Activated T-helper 1 cell treated with anti-CD3 and anti-CD28 coated beads, Interleukin-12 subunit alpha, Interleukin-12 subunit beta, Interleukin-2, Interleukin-4 antibody, amounts not matched to agents 30 ng/mL and 10 ng/mL and 1 ng/mL, durations not matched to agents 14 hours and 24 hours and 36 hours (primary cell): ENCODE measurements at regions of chr3 and their contacts with region 1.

Region 1: DNA sequence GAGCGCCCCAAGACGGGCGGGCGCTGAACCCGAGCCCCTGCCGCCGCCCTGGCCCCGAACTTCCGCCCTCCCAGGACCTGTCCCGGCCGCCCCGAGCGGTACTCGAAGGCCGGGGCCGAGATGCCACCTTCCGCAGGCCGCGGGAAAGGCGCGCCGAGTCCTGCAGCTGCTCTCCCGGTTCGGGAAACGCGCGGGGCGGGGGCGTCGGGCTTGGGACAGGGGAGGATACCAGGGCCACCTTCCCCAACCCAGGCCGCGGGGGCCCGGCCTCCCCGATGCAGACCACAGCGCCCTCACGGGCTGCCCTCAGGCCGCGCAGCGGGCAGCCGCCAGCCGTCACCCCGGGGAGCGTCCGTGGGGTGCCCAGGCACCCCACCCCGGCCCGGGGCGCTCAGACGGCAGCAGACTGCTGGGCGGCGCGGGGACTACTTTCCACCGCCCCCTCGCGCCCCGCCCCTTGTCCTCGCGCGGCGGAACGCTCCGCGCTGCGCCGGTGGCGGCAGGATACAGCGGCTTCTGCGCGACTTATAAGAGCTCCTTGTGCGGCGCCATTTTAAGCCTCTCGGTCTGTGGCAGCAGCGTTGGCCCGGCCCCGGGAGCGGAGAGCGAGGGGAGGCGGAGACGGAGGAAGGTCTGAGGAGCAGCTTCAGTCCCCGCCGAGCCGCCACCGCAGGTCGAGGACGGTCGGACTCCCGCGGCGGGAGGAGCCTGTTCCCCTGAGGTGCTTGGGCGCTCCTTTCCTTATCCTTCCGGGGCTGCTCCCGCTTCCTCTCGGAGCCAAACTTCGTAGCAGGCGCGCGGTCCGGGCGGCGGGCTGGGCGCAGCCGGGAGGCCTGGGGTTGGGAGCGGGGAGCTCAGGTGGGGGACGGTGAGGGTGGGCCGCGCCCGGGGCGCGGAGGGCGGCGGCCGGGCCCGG is at the start of gene CTNNB1:
- DNase-seq: peak; percentile 87
- H3K4me3 Mint-ChIP-seq: peak within 1 kb of the TSS; percentile 97
- H3K27ac Mint-ChIP-seq: peak within 1 kb of the TSS; percentile 98
- H3K4me1 Mint-ChIP-seq: peaks cover 36% of the 10 kb centered on the region
- H3K27me3 Mint-ChIP-seq: peaks cover 22% of the 10 kb centered on the region
- total RNA-seq, gene CTNNB1: 137 and 139 TPM in 2 replicates

Region 2: DNA sequence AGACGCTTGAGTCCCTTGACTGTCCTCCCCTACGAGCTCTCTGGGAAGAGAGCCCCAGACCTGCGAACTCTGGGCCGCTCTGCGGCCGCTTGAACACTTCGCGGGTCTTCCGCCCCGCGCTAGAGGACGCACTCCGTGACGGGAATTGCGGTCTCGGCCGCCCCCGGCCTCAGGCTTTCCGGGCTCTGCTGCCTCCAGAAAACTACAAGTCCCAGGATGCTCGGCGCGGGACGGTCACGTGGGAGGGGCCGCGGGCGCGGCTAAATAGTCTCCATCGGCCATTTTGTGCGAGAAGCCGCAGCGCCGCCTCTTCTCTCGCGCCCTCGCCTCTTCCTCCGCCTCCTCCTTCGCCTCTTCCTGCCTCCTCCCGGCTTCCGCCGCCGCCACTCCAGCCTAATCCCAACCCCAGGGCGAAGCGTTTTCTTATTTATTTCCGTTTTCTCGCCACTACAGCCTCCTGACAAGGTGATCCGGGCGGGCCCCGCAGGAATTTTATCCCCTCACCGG is 889.7 kb before region 1 on chr3 and contains the start of gene EIF1B:
- intact Hi-C with region 1: loop called (anchors 1 kb)
- DNase-seq: peak; percentile 98
- H3K4me3 Mint-ChIP-seq: peak within 1 kb of the TSS; percentile 96
- H3K27ac Mint-ChIP-seq: peak within 1 kb of the TSS; percentile 95
- H3K4me1 Mint-ChIP-seq: peaks cover 28% of the 10 kb centered on the region
- H3K27me3 Mint-ChIP-seq: no peaks in the 10 kb centered on the region
- total RNA-seq, gene EIF1B: 49.1 and 49.6 TPM in 2 replicates

Region 3: GRCh38 chr3:40524568-40525285 is 674.5 kb before region 1 on chr3 and contains the start of gene ZNF621:
- intact Hi-C with region 1: loop called (anchors 2 kb)
- DNase-seq: peak; percentile 84
- H3K4me3 Mint-ChIP-seq: peak within 1 kb of the TSS; percentile 97
- H3K27ac Mint-ChIP-seq: peak within 1 kb of the TSS; percentile 95
- H3K4me1 Mint-ChIP-seq: peaks cover 26% of the 10 kb centered on the region
- H3K27me3 Mint-ChIP-seq: no peaks in the 10 kb centered on the region
- total RNA-seq, gene ZNF621: 18.3 and 19.0 TPM in 2 replicates

Region 4: DNA sequence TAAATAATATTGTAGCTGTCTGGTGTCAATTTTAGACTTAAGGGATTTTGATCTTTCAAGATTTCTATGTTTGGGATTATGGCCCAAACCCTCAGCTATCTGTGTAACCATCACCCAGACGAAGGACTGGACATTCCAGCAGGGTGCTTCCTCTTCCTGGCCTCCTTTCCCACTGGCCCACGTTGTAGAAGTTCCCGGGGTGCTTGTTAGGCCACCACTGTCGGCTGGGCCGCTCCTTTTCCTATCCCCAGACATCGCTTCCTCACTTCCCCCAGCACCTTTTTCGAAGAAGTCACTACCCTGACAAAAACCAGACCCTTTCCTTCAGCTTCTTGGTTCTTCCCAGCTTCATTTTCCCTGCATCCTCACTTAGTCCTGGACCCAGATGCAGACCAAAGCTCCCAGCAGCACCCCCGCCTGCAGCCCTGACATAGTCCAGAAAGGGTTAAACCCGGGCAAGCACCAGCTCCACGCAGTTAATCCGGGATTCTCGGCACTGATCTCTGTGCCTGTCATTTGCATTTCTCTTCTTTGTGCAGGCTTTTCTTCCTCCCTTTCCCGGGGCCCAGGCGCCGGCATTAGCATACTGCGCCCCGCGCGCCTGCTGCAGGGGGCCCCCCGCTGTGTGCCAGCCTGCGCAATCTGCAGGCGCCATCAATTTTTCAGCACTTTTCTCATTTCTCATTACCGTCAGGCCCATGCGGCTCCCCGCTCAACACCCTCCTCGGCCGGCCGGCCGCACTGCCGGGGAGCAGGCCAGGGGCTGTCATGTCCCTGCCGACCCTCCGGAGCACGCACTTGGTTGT is 583.9 kb before region 1 on chr3:
- intact Hi-C with region 1: no loop called
- DNase-seq: no peak
- H3K4me3 Mint-ChIP-seq: no peak overlapping the region
- H3K27ac Mint-ChIP-seq: no peak overlapping the region
- H3K4me1 Mint-ChIP-seq: no peaks in the 10 kb centered on the region
- H3K27me3 Mint-ChIP-seq: peaks cover 26% of the 10 kb centered on the region

Region 5: GRCh38 chr3:40971191-40972168 is 227.7 kb before region 1 on chr3:
- intact Hi-C with region 1: loop called (anchors 1 kb)
- DNase-seq: peak; percentile 24
- H3K4me3 Mint-ChIP-seq: peak overlapping the region; percentile 62
- H3K27ac Mint-ChIP-seq: peak overlapping the region; percentile 97
- H3K4me1 Mint-ChIP-seq: peaks cover 64% of the 10 kb centered on the region
- H3K27me3 Mint-ChIP-seq: peaks cover 2% of the 10 kb centered on the region

Region 6: DNA sequence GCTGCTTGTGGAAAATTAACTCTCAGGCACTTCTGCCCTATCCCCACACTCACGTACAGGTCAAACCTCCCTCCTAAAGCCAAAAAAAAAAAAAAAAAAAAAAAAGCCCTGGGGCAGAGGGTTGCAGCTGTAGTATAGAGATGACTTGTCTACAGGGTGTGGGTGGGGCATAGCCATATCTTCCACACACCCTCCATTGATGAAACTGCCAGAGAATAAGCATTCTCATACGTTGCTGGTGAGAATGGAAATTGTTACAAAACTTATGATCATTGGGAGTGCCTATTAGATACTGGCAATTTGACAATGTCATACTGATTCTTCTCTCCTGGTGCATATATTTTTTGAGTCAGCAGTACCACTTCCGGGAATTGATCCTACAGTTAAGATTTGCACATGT is 10.9 kb before region 1 on chr3:
- intact Hi-C with region 1: loop called (anchors 1 kb)
- DNase-seq: no peak
- H3K4me3 Mint-ChIP-seq: no peak overlapping the region
- H3K27ac Mint-ChIP-seq: peak overlapping the region; percentile 51
- H3K4me1 Mint-ChIP-seq: peaks cover 35% of the 10 kb centered on the region
- H3K27me3 Mint-ChIP-seq: peaks cover 12% of the 10 kb centered on the region

Region 7: GRCh38 chr3:41209646-41210045 is 10.4 kb after region 1 on chr3:
- intact Hi-C with region 1: no loop called
- DNase-seq: no peak
- H3K4me3 Mint-ChIP-seq: no peak overlapping the region
- H3K27ac Mint-ChIP-seq: no peak overlapping the region
- H3K4me1 Mint-ChIP-seq: peaks cover 67% of the 10 kb centered on the region
- H3K27me3 Mint-ChIP-seq: no peaks in the 10 kb centered on the region

Region 8: GRCh38 chr3:41234823-41235721 is 35.9 kb after region 1 on chr3:
- intact Hi-C with region 1: loop called (anchors 5 kb)
- DNase-seq: no peak
- H3K4me3 Mint-ChIP-seq: no peak overlapping the region
- H3K27ac Mint-ChIP-seq: no peak overlapping the region
- H3K4me1 Mint-ChIP-seq: peaks cover 7% of the 10 kb centered on the region
- H3K27me3 Mint-ChIP-seq: no peaks in the 10 kb centered on the region

Region 9: DNA sequence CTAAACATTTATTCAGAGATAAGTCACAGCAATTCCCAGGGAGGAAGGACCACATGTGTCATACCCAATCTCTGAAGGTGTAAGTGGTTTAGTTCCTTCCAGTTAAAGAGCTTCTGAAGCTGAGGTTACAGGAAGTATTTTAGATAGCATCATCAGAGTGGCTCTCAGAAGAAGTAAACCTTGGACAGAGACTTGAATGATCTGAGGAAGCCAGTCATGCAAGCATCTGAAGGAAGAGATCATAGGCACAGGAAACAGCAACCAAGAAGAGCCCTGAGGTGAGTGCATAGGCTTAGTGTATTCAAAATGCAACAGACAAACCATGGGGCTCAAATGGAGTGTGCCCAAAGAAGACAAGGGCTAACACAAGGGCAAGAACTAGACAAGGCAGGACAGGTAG is 552.4 kb after region 1 on chr3:
- intact Hi-C with region 1: no loop called
- DNase-seq: no peak
- H3K4me3 Mint-ChIP-seq: no peak overlapping the region
- H3K27ac Mint-ChIP-seq: no peak overlapping the region
- H3K4me1 Mint-ChIP-seq: peaks cover 8% of the 10 kb centered on the region
- H3K27me3 Mint-ChIP-seq: no peaks in the 10 kb centered on the region

Region 10: GRCh38 chr3:41961750-41962679 is 762.8 kb after region 1 on chr3 and contains the start of gene ULK4:
- intact Hi-C with region 1: loop called (anchors 5 kb)
- DNase-seq: peak; percentile 95
- H3K4me3 Mint-ChIP-seq: peak within 1 kb of the TSS; percentile 95
- H3K27ac Mint-ChIP-seq: peak within 1 kb of the TSS; percentile 93
- H3K4me1 Mint-ChIP-seq: peaks cover 16% of the 10 kb centered on the region
- H3K27me3 Mint-ChIP-seq: peaks cover 2% of the 10 kb centered on the region
- total RNA-seq, gene ULK4: 7.3 and 8.1 TPM in 2 replicates